ENCODE measurements at regions of chr4 and their contacts with region 1.

Region 1: GRCh38 chr4:57110640-57111511 is 691 bp upstream of the IGFBP7 start:
- DNase-seq: peak in 1 of 2 donors; percentile 82
- H3K4me3 ChIP-seq: peak overlapping the region; percentile 80 to 89
- H3K27ac ChIP-seq: peak overlapping the region; percentile 95 to 98
- H3K4me1 ChIP-seq: peaks cover 0 to 14% of the 10 kb centered on the region in 2 donors
- H3K27me3 ChIP-seq: no peaks in the 10 kb centered on the region
- CTCF ChIP-seq: no peak

Region 2: GRCh38 chr4:56977321-56978012 is 133.4 kb before region 1 on chr4 and contains the start of gene NOA1:
- intact Hi-C with region 1: loop called (anchors 5 kb)
- DNase-seq: peak; percentile 98 to 100
- H3K4me3 ChIP-seq: peak within 1 kb of the TSS; percentile 84 to 91
- H3K27ac ChIP-seq: peak within 1 kb of the TSS; percentile 90 to 94
- H3K4me1 ChIP-seq: peaks cover 5 to 19% of the 10 kb centered on the region in 2 donors
- H3K27me3 ChIP-seq: no peaks in the 10 kb centered on the region
- CTCF ChIP-seq: no peak
- total RNA-seq, gene NOA1: 36.6 TPM

Region 3: DNA sequence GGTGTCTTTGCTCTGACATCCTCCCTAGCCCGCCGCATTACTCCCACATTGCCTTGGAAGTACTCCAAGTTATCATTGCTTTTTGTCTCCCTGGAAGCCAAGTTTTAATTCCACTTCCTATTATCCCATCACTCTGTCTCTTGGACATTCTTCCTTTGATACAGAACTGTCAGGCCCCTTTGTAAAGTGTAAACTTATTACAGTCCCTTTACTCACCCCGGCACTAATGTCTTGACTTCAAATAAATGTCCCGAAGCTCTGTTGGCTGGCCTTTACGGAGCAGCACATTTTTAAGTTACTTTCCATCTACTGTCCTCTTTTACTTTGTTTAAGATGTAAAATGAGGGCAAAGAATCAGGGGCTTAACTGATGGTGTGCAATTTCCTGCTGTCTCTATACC is 222.8 kb after region 1 on chr4:
- intact Hi-C with region 1: no loop called
- DNase-seq: no peak
- H3K4me3 ChIP-seq: no peak overlapping the region
- H3K27ac ChIP-seq: no peak overlapping the region
- H3K4me1 ChIP-seq: no peaks in the 10 kb centered on the region
- H3K27me3 ChIP-seq: no peaks in the 10 kb centered on the region
- CTCF ChIP-seq: no peak

Region 4: DNA sequence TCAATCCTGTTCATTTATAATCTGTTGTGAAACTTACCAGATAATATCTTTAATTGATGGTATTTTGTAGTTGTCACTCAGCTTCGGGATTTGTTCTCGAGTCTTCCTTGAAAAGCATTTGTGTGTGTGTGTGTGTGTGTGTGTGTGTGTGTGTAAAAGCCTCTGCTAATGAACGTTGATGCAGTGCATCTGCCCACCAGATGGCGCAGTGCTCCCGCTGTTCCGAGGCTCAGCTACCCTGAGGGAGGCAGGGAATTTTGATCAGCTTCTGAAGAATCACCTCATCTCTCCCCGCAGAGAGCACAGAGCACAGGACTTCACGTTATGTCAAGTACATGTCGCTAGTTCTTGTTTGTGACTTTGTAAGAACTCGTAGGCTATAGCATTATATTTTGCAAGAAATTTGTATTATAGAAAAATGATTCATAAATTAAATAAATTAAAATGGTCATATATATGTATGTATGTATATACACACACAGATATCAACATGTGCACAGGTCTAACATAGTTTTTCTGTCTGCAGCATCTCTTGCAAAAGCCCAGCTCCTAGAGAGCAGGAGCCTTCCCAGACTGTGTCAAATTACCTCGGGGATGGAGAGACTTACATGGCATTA is 316.0 kb after region 1 on chr4:
- intact Hi-C with region 1: loop called (anchors 5 kb)
- DNase-seq: peak in 1 of 2 donors; percentile 74
- H3K4me3 ChIP-seq: no peak overlapping the region
- H3K27ac ChIP-seq: no peak overlapping the region
- H3K4me1 ChIP-seq: peaks cover 0 to 8% of the 10 kb centered on the region in 2 donors
- H3K27me3 ChIP-seq: no peaks in the 10 kb centered on the region
- CTCF ChIP-seq: peak; percentile 44 to 79 (median 62)

Measured in ascending aorta (tissue), 2 donors.